Cardiac septum (tissue), 1 donor: ENCODE measurements at regions of chr3 and their contacts with region 1.

Region 1: GRCh38 chr3:187210545-187211327 is 13.4 kb downstream of the RTP1 start:
- DNase-seq: no peak

Region 2: GRCh38 chr3:187616307-187616972 is 405.7 kb after region 1 on chr3:
- intact Hi-C with region 1: loop called (anchors 10 kb)
- DNase-seq: no peak